Heart left ventricle (tissue), 16 donors: ENCODE measurements at regions of chr5 and their contacts with region 1.

Region 1: GRCh38 chr5:178859625-178860531 is at the start of gene ZNF354B:
- DNase-seq: peak; percentile 89 to 94 (median 93)
- ATAC-seq: peak; percentile 95 to 99 (median 98)
- H3K4me3 ChIP-seq: peak within 1 kb of the TSS; percentile 68 to 96 (median 86)
- H3K27ac ChIP-seq: peak within 1 kb of the TSS; percentile 45 to 93 (median 85)
- H3K4me1 ChIP-seq: peaks cover 0 to 25% (median 12%) of the 10 kb centered on the region in 12 donors
- H3K27me3 ChIP-seq: no peaks in the 10 kb centered on the region
- CTCF ChIP-seq: peak in 6 of 12 donors; percentile 13 to 38 (median 34)
- POLR2A ChIP-seq: peak; percentile 42 to 72
- total RNA-seq, gene ZNF354B: 5.2 to 11.9 (median 7.6) TPM

Region 2: GRCh38 chr5:178739452-178740193 is 120.3 kb before region 1 on chr5:
- intact Hi-C with region 1: loop called in 7 of 10 experiments (anchors 5 to 10 kb)
- DNase-seq: no peak
- ATAC-seq: no peak
- H3K4me3 ChIP-seq: no peak overlapping the region
- H3K27ac ChIP-seq: no peak overlapping the region
- H3K4me1 ChIP-seq: no peaks in the 10 kb centered on the region
- H3K27me3 ChIP-seq: no peaks in the 10 kb centered on the region
- CTCF ChIP-seq: no peak
- POLR2A ChIP-seq: no peak

Region 3: GRCh38 chr5:178931846-178932760 is 72.2 kb after region 1 on chr5:
- intact Hi-C with region 1: loop called in 1 of 10 experiments (anchors 10 kb)
- DNase-seq: no peak
- ATAC-seq: no peak
- H3K4me3 ChIP-seq: no peak overlapping the region
- H3K27ac ChIP-seq: no peak overlapping the region
- H3K4me1 ChIP-seq: no peaks in the 10 kb centered on the region
- H3K27me3 ChIP-seq: no peaks in the 10 kb centered on the region
- CTCF ChIP-seq: no peak
- POLR2A ChIP-seq: no peak

Region 4: GRCh38 chr5:179023528-179024430 is 163.9 kb after region 1 on chr5 and contains the start of gene ZNF879:
- intact Hi-C with region 1: loop called in 1 of 10 experiments (anchors 5 kb)
- DNase-seq: peak; percentile 95 to 97 (median 96)
- ATAC-seq: peak; percentile 95 to 99 (median 99)
- H3K4me3 ChIP-seq: peak within 1 kb of the TSS; percentile 38 to 99 (median 79)
- H3K27ac ChIP-seq: peak within 1 kb of the TSS; percentile 53 to 96 (median 87)
- H3K4me1 ChIP-seq: peaks cover 0 to 18% (median 10%) of the 10 kb centered on the region in 12 donors
- H3K27me3 ChIP-seq: no peaks in the 10 kb centered on the region
- CTCF ChIP-seq: no peak
- POLR2A ChIP-seq: peak in 1 of 2 donors; percentile 59
- total RNA-seq, gene ZNF879: 2.8 to 4.5 (median 3.3) TPM